ENCODE measurements at regions of chr9 and their contacts with region 1.

Region 1: DNA sequence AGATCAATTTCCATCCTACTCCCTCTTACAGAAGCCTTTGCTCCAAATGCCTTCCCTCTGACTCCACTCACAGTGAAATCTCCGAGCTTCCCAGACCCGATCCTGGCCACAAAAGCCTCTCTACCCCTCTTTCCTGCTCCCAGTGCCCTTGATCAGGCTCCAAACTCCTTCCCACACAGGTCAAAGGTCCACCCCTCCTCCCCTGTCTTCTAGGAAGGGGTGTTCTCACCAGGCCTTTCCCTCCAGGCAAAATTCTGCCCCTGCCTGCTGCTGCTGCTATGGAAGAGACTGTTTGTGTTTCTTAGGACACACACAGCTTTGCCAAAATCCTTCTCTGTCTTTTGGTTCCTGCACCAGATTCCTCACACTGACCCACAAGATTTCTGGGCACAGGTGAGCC is 85.8 kb upstream of the ALDH1A1 start:
- DNase-seq: no peak
- H3K4me3 ChIP-seq: no peak overlapping the region
- H3K4me3 Mint-ChIP-seq: no peak overlapping the region
- H3K27ac ChIP-seq: no peak overlapping the region
- H3K27ac Mint-ChIP-seq: no peak overlapping the region
- H3K4me1 ChIP-seq: no peaks in the 10 kb centered on the region
- H3K4me1 Mint-ChIP-seq: no peaks in the 10 kb centered on the region
- H3K27me3 ChIP-seq: no peaks in the 10 kb centered on the region
- H3K27me3 Mint-ChIP-seq: peaks cover 1 to 53% of the 10 kb centered on the region in 2 donors

Region 2: DNA sequence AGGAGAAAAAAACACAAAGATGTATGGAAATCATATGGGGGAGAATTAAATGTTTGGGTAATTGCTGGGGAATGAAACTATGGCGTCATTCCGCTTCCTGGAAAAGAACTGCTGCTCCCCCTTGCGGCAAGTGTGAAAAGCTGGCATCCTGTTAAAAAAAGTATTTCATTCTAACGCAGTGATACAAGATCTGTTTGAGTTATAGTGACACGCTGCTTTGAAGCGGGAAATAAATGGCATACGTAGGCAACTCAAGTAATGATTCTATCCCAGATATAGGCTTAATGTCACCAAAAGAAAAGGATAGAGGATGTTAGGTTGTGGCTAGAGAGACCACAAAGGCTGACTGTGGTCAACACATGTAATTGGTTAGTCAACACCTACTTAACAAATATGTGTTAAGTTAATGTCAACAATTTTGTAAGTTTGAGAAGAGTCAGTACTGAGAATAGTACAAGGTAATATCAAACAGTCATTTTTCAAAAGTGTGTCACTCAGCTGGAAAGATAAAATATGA is 15.5 kb before region 1 on chr9:
- CTCF ChIA-PET with region 1: interaction called, 4 read pairs
- POLR2A ChIA-PET with region 1: interaction called, 13 read pairs
- DNase-seq: peak; percentile 5 to 47 (median 19)
- H3K4me3 ChIP-seq: no peak overlapping the region
- H3K4me3 Mint-ChIP-seq: peak overlapping the region in 4 of 7 donors; percentile 2 to 15 (median 8)
- H3K27ac ChIP-seq: no peak overlapping the region
- H3K27ac Mint-ChIP-seq: peak overlapping the region in 1 of 8 donors; percentile 34
- H3K4me1 ChIP-seq: no peaks in the 10 kb centered on the region
- H3K4me1 Mint-ChIP-seq: peaks cover 9 to 11% (median 10%) of the 10 kb centered on the region in 3 donors
- H3K27me3 ChIP-seq: no peaks in the 10 kb centered on the region
- H3K27me3 Mint-ChIP-seq: peaks cover 17 to 41% of the 10 kb centered on the region in 2 donors